HepG2 (cell line): ENCODE measurements at regions of chr12 and their contacts with region 1.

Region 1: GRCh38 chr12:94149119-94149780 is 873 bp downstream of the PLXNC1 start:
- DNase-seq: no peak
- ATAC-seq: peak; percentile 70
- H3K4me3 ChIP-seq: peak overlapping the region; percentile 64 to 90 (median 76)
- H3K27ac ChIP-seq: peak overlapping the region; percentile 72
- H3K4me1 ChIP-seq: peaks cover 59% of the 10 kb centered on the region
- H3K27me3 ChIP-seq: peaks cover 0 to 12% of the 10 kb centered on the region in 2 experiments; a peak in 2 of 5 replicates
- CTCF ChIP-seq: peak; percentile 85
- EP300 ChIP-seq: no peak
- POLR2A ChIP-seq: no peak
- RAD21 ChIP-seq: peak; percentile 92

Region 2: DNA sequence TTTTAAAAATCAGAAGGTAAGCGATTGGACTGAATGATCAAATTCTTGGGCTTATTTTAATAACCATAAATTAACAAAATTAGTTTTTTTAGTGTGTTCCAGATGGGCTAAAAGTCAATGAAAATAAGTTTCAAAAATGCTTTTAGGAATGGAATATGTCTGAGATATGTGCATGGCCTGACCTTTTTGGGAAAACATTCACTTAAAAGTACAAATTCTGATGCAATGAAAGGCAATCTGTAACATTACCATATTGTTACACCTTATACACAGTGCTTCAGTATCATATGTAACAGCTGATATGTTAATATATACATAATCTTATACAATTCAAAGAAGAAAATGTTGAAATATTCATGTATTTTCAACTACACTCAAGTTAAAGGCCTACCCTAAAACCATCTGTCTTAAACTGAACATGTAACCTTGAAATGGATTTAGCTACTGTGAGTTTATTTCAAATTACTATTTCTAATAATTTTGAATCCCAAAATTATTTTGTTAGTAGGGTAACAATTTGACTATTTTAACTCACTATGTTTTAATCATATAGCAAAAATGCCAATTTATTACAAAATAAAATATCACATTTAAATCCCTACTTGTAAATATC is 1305.0 kb before region 1 on chr12:
- CTCF ChIA-PET with region 1: no interaction called
- POLR2A ChIA-PET with region 1: no interaction called
- in situ Hi-C with region 1: no loop called
- intact Hi-C with region 1: no loop called
- DNase-seq: no peak
- ATAC-seq: no peak
- H3K4me3 ChIP-seq: no peak overlapping the region
- H3K27ac ChIP-seq: no peak overlapping the region
- H3K4me1 ChIP-seq: peaks cover 15% of the 10 kb centered on the region
- H3K27me3 ChIP-seq: no peaks in the 10 kb centered on the region
- CTCF ChIP-seq: no peak
- EP300 ChIP-seq: no peak
- POLR2A ChIP-seq: no peak
- RAD21 ChIP-seq: no peak

Region 3: DNA sequence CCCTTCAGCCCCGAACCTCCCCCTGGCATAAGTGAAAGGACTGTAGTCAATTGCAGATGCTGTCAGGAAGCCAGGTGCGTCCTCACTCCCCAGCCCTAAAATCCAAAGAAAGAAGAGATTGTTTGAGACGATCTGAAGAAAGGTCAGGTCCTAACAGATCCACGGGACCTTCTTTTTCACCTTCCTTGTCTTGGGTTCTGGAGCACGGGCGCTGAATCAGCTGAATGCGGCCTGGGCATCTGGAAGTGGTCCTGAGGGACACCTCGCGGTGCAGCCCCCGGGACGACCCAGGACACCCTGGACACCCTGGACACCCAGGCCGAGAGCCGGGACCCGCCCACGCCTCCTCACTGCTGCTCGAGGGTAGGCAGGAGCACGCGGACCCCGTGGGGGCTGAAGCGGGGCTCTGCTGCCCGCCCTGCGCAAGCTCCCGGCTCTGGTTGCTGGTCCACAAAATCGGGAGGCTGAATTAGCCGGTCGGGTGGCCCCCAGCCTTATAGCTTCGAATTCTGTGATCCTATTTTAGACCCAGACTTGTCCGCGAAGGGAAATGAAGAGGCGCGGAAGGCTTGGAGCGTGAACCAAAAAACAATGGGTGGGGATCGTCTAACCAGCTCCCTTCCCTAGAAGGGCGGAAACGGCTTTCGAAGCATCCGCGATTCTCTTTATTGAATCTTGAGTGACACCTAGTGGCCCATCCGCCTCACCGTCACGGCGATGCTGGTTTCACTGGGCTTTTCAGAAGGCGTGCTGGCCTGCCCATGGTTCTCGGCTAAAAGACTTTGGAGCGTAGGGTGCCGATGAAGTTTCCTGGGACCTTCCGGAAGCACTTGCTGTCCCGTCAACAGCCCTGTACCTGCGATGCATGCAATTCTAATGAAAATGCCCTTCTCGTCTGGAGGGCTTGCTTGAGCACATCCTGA is 47.3 kb before region 1 on chr12:
- CTCF ChIA-PET with region 1: no interaction called
- POLR2A ChIA-PET with region 1: no interaction called
- in situ Hi-C with region 1: no loop called
- intact Hi-C with region 1: no loop called
- DNase-seq: peak; percentile 71
- ATAC-seq: peak; percentile 87
- H3K4me3 ChIP-seq: peak overlapping the region; percentile 49 to 76 (median 55)
- H3K27ac ChIP-seq: no peak overlapping the region
- H3K4me1 ChIP-seq: peaks cover 41% of the 10 kb centered on the region
- H3K27me3 ChIP-seq: peaks cover 0 to 15% of the 10 kb centered on the region in 2 experiments; a peak in 2 of 5 replicates
- CTCF ChIP-seq: peak; percentile 94
- EP300 ChIP-seq: no peak
- POLR2A ChIP-seq: no peak
- RAD21 ChIP-seq: peak; percentile 83

Region 4: DNA sequence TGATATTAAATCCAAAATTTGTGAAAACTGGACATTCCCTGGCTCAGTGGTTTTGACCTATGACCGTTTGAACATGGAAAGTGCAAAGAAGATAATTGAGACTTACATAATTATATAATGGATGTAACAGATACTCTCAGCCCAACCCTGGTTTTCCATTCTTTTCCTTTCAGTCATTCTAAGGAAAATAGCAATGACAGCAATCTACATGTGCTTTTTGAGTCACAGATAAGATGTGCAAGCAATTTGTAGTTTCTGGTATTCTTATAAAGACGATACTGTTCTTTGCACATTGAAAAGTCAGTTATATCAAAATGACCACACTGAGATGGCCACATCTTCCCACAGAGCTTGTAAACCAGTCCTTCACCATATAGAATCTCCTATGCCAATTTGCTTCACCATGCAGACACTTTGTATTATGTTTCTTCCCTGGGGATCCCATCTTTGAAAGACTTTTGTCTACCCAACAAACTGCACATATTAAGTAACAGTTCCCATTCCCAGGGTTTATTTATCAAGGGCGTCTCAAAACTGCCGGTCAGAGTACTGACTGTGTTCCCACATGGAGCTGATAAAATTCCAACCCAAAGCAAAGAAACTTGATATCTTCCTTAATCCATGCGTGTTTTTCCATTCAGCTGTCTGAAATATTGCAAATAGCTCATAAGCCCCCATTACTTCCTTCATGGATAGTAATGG is 33.9 kb after region 1 on chr12:
- CTCF ChIA-PET with region 1: interaction called, 4 read pairs
- POLR2A ChIA-PET with region 1: interaction called, 45 read pairs
- in situ Hi-C with region 1: no loop called
- intact Hi-C with region 1: loop called (anchors 1 kb)
- DNase-seq: peak; percentile 90
- ATAC-seq: peak; percentile 71
- H3K4me3 ChIP-seq: peak overlapping the region; percentile 3 to 51 (median 7); a peak in 2 of 6 replicates
- H3K27ac ChIP-seq: peak overlapping the region; percentile 85
- H3K4me1 ChIP-seq: peaks cover 64% of the 10 kb centered on the region
- H3K27me3 ChIP-seq: no peaks in the 10 kb centered on the region
- CTCF ChIP-seq: no peak
- EP300 ChIP-seq: no peak
- POLR2A ChIP-seq: no peak
- RAD21 ChIP-seq: no peak; the same call in 1 of the 2 replicates

Region 5: GRCh38 chr12:94230357-94230905 is 81.2 kb after region 1 on chr12:
- CTCF ChIA-PET with region 1: no interaction called
- POLR2A ChIA-PET with region 1: no interaction called
- in situ Hi-C with region 1: no loop called
- intact Hi-C with region 1: loop called (anchors 1 kb)
- DNase-seq: peak; percentile 99
- ATAC-seq: peak; percentile 97
- H3K4me3 ChIP-seq: peak overlapping the region in 1 of 3 experiments; percentile 4; a peak in 1 of 6 replicates
- H3K27ac ChIP-seq: peak overlapping the region; percentile 82
- H3K4me1 ChIP-seq: peaks cover 49% of the 10 kb centered on the region
- H3K27me3 ChIP-seq: no peaks in the 10 kb centered on the region
- CTCF ChIP-seq: no peak
- EP300 ChIP-seq: peak in 1 of 2 experiments; percentile 90; a peak in 2 of 4 replicates
- POLR2A ChIP-seq: 0 out of 4 replicates have a peak, but pooled peaks of 1 of the 2 experiments have one; percentile 33
- RAD21 ChIP-seq: no peak; the same call in 1 of the 2 replicates

Region 6: GRCh38 chr12:94305130-94305957 is 156.1 kb after region 1 on chr12:
- CTCF ChIA-PET with region 1: no interaction called
- POLR2A ChIA-PET with region 1: interaction called, 3 read pairs
- in situ Hi-C with region 1: no loop called
- intact Hi-C with region 1: loop called (anchors 10 kb)
- DNase-seq: peak; percentile 61
- ATAC-seq: peak; percentile 82
- H3K4me3 ChIP-seq: no peak overlapping the region
- H3K27ac ChIP-seq: peak overlapping the region; percentile 35
- H3K4me1 ChIP-seq: peaks cover 22% of the 10 kb centered on the region
- H3K27me3 ChIP-seq: no peaks in the 10 kb centered on the region
- CTCF ChIP-seq: no peak
- EP300 ChIP-seq: no peak; a peak in 1 of 4 replicates
- POLR2A ChIP-seq: no peak
- RAD21 ChIP-seq: no peak

Region 7: GRCh38 chr12:94435511-94435927 is 286.3 kb after region 1 on chr12:
- CTCF ChIA-PET with region 1: no interaction called
- POLR2A ChIA-PET with region 1: no interaction called
- in situ Hi-C with region 1: loop called (anchors 10 kb)
- intact Hi-C with region 1: loop called (anchors 2 kb)
- DNase-seq: no peak
- ATAC-seq: no peak
- H3K4me3 ChIP-seq: no peak overlapping the region
- H3K27ac ChIP-seq: no peak overlapping the region
- H3K4me1 ChIP-seq: peaks cover 39% of the 10 kb centered on the region
- H3K27me3 ChIP-seq: no peaks in the 10 kb centered on the region
- CTCF ChIP-seq: no peak
- EP300 ChIP-seq: no peak
- POLR2A ChIP-seq: no peak
- RAD21 ChIP-seq: no peak